G401 (cell line): ENCODE measurements at regions of chr3 and their contacts with region 1.

Region 1: DNA sequence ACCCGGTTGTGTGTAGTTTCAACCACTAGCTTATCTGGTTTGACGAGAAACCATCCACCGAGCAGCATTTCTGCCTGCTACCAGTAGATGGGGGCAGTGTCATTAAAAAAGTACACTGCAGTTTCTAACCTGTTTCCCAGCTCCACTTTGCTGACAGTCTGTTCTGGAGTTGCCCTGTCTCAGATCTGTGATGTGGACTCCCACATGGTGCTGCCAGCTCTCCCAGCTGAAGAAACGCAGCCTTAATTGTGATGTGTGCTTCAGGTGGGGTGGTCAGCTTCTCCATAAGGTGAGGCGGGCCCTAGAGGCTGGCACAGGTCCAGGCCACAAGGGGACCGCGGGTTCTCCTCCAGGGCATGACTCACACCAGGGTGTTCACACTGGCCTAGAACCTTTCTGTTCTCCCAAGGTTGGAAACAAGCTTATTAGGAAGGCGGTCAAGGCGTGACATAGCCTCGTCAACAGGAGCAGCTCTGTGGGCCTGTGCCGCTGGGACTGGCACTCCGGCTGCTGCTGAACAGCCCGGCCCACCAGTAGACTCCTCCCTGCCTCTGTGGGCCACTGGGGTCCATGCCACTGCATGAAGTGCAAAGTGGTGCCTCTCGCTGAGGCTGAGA is 2.9 kb upstream of the FAM43A start:
- DNase-seq: peak; percentile 90

Region 2: DNA sequence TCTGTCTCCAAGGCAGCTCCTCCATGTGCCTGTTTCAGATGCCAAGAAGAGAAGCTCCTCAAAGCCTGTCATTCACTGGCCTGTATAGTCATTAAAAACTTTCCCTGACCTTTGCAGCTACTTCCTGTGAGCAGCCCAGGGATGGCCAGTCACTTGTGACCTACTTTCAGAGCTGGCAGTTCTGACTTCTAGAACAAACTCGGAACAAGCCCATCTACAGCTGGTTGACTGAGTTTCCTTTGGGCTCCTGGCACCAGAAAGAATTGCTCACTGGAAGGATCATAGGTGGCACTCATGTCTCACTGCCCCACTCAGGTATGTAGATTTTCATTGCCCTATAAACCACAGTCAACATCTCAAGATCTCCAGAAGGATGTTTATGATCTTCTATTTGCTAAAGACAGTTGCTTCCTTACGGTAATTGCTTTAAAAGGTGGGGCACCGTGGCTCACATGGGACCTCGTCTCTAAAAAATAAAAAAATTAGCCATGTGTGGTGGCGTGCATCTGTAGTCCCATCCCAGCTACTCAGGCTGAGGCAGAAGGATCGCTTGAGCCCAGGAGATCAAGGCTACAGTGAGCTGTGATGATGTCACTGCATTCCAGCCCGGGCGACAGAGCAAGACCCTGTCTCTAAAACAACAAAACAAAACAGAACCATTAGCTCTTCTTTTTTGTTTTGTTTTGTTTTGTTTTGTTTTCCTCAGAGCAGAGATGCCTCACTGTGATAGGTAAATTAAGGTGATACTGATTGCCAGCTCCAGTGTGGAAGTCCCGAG is 184.8 kb before region 1 on chr3:
- in situ Hi-C with region 1: no loop called
- DNase-seq: peak; percentile 28

Region 3: DNA sequence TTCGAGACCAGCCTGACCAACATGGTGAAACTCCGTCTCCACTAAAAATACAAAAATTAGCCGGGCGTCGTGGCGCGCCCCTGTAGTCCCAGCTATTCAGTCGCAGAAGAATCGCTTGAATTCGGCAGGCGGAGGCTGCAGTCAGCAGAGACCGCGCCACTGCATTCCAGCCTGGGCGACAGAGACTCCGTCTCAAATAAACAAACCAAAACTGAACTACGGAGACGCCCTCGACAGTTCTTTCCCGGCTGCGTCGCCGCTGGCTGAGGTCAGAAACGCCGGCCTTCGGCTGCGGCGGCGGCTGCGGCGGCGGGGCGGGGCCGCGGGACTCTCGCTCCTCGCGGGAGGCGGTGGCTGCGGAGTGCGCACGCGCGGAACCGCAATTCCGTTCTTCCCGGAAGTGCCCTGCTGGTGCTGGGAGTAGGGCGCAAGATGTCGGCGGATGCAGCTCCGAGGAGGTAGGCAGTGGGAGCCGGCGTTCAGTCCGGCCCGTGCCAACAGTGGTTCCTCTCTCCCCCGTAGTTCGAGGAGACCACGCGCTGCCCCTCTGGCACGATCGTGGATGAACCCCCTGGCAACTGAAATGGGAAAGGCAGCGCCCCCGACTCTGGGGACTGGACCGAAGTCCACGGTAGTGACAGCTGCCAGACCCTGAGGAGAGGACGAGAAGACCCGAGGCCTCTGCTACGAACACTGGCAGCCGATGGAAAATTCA is 99.0 kb before region 1 on chr3:
- in situ Hi-C with region 1: no loop called
- DNase-seq: peak; percentile 88

Region 4: GRCh38 chr3:195240171-195240748 is 557.5 kb after region 1 on chr3:
- in situ Hi-C with region 1: loop called (anchors 10 kb)
- DNase-seq: peak; percentile 20